Upper lobe of right lung (tissue), 1 donor: ENCODE measurements at regions of chr7 and their contacts with region 1.

Region 1: GRCh38 chr7:134954197-134955082 is 31.9 kb upstream of the AGBL3 start:
- DNase-seq: no peak
- ATAC-seq: no peak
- H3K4me3 ChIP-seq: no peak overlapping the region
- H3K27ac ChIP-seq: no peak overlapping the region
- H3K4me1 ChIP-seq: no peaks in the 10 kb centered on the region
- H3K27me3 ChIP-seq: no peaks in the 10 kb centered on the region
- CTCF ChIP-seq: peak; percentile 62

Region 2: DNA sequence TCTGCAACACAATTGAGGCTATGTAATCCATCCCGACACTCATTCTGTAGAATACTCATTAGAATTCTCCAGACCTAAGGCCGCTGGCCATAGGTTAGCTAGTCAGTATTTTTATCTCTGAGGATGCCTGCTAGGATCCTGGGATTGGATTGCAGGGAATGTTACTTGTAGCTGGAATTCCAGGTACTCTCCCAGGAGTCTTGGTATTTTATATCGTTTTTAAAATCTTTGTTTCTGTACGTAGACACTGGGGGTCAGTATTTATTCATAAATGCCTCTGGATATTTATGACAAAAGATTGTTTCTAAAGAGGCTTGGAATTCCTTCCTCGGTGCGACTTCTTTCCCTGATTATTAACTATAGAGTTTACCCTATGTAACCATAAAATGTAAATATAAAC is 267.7 kb before region 1 on chr7:
- intact Hi-C with region 1: loop called (anchors 10 kb)
- DNase-seq: no peak
- ATAC-seq: no peak
- H3K4me3 ChIP-seq: no peak overlapping the region
- H3K27ac ChIP-seq: no peak overlapping the region
- H3K4me1 ChIP-seq: peaks cover 13% of the 10 kb centered on the region
- H3K27me3 ChIP-seq: no peaks in the 10 kb centered on the region
- CTCF ChIP-seq: peak; percentile 48

Region 3: DNA sequence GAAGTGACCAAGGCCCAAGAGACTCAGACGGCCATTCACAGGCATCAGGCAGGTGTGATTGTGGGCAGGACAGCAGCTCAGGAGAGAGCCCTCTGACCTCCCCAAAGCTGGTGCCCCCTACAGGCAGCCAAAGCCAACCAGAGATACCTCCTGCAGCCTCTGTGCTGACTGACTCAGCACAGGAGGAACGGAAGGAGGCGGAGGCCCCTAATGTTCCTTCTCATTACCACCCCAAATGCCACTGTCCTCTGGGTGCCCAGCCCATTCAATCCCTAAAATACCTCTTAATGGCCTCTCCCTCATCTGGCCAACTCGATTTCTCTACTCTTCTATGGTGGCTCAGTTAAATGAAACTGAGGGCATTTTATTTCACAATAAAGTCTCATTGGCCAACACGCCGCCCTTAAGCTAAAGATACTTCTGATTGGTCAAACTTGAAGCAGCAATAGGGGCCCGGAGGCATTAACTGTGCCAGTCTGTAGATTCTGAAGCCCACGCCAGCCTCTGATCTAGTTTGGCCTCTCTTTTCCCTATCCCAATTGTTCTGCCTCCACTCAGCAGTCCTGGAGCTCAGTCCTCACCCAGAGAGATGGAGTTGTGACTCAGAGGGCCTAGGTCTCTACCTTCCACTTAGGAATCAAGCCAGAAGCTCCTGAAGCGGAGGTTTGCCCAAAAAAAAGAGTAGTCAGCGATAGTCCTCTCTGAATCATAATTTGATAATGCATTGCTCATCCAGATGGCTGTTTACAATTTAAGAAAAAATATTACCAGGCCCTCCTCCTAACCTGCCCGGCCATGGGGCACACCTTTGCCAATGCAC is 214.9 kb after region 1 on chr7:
- intact Hi-C with region 1: loop called (anchors 10 kb)
- DNase-seq: no peak
- ATAC-seq: peak; percentile 6
- H3K4me3 ChIP-seq: peak overlapping the region; percentile 94
- H3K27ac ChIP-seq: peak overlapping the region; percentile 99
- H3K4me1 ChIP-seq: peaks cover 45% of the 10 kb centered on the region
- H3K27me3 ChIP-seq: no peaks in the 10 kb centered on the region
- CTCF ChIP-seq: peak; percentile 41